ENCODE measurements at regions of chr2 and their contacts with region 1.

Region 1: GRCh38 chr2:241637000-241637791 is at the starts of genes ATG4B and THAP4:
- DNase-seq: peak; percentile 69 to 91
- H3K4me3 ChIP-seq: peak within 1 kb of the TSS; percentile 92
- H3K27ac ChIP-seq: peak within 1 kb of the TSS; percentile 86
- H3K4me1 ChIP-seq: peaks cover 25% of the 10 kb centered on the region
- H3K27me3 ChIP-seq: no peaks in the 10 kb centered on the region
- CTCF ChIP-seq: no peak
- total RNA-seq, gene ATG4B: 162 and 177 TPM in 2 replicates
- total RNA-seq, gene THAP4: 78.2 and 94.8 TPM in 2 replicates

Region 2: GRCh38 chr2:241271641-241272297 is 365.4 kb before region 1 on chr2:
- CTCF ChIA-PET with region 1: interaction called, 3 read pairs
- POLR2A ChIA-PET with region 1: interaction called, 6 read pairs
- intact Hi-C with region 1: loop called (anchors 10 kb)
- DNase-seq: peak; percentile 76 to 84
- H3K4me3 ChIP-seq: peak overlapping the region; percentile 65
- H3K27ac ChIP-seq: peak overlapping the region; percentile 42; the same call in 1 of the 2 replicates
- H3K4me1 ChIP-seq: peaks cover 31% of the 10 kb centered on the region
- H3K27me3 ChIP-seq: no peaks in the 10 kb centered on the region
- CTCF ChIP-seq: no peak

Region 3: DNA sequence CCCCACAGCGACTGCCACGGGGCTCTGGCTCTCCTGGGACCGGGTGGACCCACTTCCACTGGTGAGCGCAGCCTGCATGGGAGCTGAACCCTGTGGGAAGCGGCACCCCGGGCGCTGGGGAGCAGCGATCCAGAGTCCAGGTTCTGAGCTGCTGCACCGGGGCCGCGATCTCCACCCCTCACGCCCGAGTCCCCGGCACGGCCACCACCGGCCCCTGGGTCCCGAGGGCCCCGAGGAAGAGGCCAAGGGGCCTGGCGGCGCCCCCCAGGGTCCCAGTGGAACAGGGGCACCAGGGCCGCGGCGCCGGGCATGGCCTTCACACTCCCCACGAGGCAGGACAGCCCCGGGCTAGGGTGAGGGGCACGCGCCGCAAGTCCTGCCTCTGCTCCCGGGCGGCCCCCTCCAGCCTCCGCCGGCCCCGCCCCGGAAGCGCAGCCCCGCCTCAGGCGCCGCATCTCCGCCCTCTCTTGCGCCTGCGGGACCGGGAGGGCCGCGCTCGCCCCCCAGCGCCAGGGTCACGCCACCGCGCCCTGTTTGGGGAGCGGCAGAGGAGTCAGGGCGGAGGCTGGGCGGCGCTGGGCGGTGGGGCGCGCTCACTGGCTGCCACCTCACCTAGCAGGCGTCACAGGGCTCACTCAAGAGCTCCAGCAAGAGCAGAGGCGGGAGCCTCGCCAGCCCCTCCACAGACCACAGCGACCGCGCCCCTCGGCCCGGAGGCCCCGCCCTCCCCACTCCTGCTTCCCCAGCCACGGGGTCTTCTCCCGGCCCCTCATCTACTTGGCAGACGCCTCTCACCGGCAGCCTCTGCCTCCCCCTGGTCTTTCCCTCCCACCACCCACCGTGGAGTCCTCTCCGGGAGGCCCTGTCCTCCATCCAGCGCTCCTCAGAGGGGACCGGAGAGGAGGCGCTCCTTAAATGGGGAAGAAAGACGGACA is 27.1 kb before region 1 on chr2:
- CTCF ChIA-PET with region 1: interaction called, 12 read pairs
- POLR2A ChIA-PET with region 1: no interaction called
- intact Hi-C with region 1: no loop called
- DNase-seq: peak in 1 of 2 experiments; percentile 98
- H3K4me3 ChIP-seq: no peak overlapping the region
- H3K27ac ChIP-seq: no peak overlapping the region
- H3K4me1 ChIP-seq: no peaks in the 10 kb centered on the region
- H3K27me3 ChIP-seq: no peaks in the 10 kb centered on the region
- CTCF ChIP-seq: no peak

Region 4: DNA sequence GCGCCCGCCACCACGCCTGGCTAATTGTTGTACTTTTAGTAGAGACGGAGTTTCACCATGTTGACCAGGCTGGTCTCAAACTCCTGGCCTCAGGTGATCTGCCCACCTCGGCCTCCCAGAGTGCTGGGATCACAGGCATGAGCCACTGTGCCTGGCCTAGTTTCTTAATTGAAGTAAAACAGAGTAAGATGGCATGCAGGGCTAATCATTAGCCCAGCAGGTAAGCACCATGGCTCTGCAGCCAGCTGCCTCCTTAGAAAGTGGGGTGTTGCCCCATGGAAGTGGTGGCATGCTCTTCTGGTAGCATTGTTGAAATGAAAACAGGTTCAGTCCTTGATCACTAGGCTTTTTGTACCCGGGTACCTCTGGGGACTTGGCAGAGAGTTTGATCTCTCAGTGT is 12.7 kb after region 1 on chr2:
- CTCF ChIA-PET with region 1: no interaction called
- POLR2A ChIA-PET with region 1: interaction called, 10 read pairs
- intact Hi-C with region 1: no loop called
- DNase-seq: no peak
- H3K4me3 ChIP-seq: no peak overlapping the region
- H3K27ac ChIP-seq: no peak overlapping the region
- H3K4me1 ChIP-seq: no peaks in the 10 kb centered on the region
- H3K27me3 ChIP-seq: no peaks in the 10 kb centered on the region
- CTCF ChIP-seq: no peak

Region 5: DNA sequence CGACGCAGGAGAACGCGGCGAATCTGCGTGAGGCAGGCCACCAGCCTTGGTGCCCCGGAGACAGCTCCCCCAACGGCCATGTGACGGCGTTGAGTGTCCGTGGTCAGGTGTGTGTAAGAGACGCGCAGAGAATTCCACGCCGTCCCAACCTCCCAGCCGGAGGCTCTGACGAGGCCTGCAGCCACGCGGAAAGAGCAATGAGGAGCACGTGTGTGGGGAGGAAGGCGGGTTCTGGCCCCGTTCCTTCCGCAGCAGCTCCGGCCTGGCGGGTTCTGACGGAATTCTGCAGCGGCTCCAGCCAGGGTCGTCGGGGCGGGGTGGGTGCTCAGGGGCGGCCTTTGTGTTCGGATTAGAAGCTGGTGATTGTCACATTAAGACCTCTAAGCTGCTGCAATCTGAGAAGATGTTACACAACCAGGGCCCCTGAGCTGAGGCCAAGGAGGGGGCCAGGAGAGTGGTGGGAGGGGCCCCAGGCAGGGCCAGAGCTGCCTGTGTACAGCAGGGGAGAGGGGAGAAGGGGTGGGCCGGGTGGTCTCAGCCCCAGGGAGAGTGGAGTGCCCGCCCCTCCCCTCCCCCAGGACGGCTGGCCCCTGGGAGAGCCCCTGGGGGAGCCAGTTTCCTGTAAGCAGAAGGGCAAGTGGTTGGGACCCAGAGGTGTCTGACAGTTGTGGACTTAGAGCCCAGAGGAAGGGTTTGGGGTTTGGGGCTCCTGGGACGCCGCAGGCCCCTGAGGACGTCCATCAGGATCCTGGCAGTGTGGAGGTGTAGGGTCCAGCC is 134.3 kb after region 1 on chr2:
- CTCF ChIA-PET with region 1: no interaction called
- POLR2A ChIA-PET with region 1: no interaction called
- intact Hi-C with region 1: no loop called
- DNase-seq: no peak
- H3K4me3 ChIP-seq: no peak overlapping the region
- H3K27ac ChIP-seq: no peak overlapping the region
- H3K4me1 ChIP-seq: peaks cover 18% of the 10 kb centered on the region
- H3K27me3 ChIP-seq: no peaks in the 10 kb centered on the region
- CTCF ChIP-seq: no peak

Measured in PC-9 (cell line).